ENCODE measurements at regions of chr17 and their contacts with region 1.

Region 1: DNA sequence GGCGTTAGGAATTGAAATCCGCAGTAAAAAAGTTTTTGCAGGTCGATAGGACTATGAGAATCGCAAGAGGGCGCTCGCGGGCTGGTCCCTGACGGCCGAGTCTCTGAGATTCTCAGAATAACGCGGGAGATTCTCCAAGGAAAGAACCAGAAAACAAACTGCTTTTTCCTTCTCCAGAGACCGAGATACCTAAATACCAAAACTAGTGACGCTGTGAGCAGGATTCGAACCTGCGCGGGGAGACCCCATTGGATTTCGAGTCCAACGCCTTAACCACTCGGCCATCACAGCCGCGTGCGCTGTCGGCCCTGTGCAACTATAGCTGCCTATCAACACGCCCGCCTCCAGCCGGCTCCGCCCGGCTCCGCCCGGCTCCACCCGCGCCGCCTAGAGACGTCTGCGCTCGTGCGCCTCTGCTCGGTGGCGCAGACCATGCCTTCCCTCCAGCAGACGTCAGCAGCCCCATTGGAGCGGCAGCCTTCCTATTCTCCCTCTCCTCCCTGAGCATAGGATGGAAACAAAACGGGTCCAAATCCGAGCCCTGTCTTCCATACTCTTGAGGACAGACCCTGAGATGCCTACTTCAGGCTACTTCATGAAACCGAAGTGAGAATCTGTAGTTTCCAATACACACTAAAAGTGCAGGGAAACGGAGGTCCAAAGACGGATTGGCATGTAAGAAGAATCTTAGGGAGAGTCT is 13.4 kb downstream of the PER1 start:
- DNase-seq: peak; percentile 99
- H3K4me3 Mint-ChIP-seq: no peak overlapping the region
- H3K27ac Mint-ChIP-seq: no peak overlapping the region
- H3K4me1 Mint-ChIP-seq: peaks cover 4% of the 10 kb centered on the region
- H3K27me3 Mint-ChIP-seq: peaks cover 5% of the 10 kb centered on the region

Region 2: GRCh38 chr17:8151123-8151640 is 12.4 kb after region 1 on chr17:
- intact Hi-C with region 1: loop called (anchors 1 kb)
- DNase-seq: peak; percentile 98
- H3K4me3 Mint-ChIP-seq: no peak overlapping the region
- H3K27ac Mint-ChIP-seq: no peak overlapping the region
- H3K4me1 Mint-ChIP-seq: peaks cover 42% of the 10 kb centered on the region
- H3K27me3 Mint-ChIP-seq: no peaks in the 10 kb centered on the region

Region 3: GRCh38 chr17:8173056-8173870 is 34.4 kb after region 1 on chr17:
- intact Hi-C with region 1: loop called (anchors 1 kb)
- DNase-seq: peak; percentile 93
- H3K4me3 Mint-ChIP-seq: peak overlapping the region; percentile 98
- H3K27ac Mint-ChIP-seq: peak overlapping the region; percentile 99
- H3K4me1 Mint-ChIP-seq: peaks cover 38% of the 10 kb centered on the region
- H3K27me3 Mint-ChIP-seq: no peaks in the 10 kb centered on the region

Region 4: GRCh38 chr17:8300627-8301242 is 161.9 kb after region 1 on chr17:
- intact Hi-C with region 1: loop called (anchors 5 kb)
- DNase-seq: peak; percentile 87
- H3K4me3 Mint-ChIP-seq: no peak overlapping the region
- H3K27ac Mint-ChIP-seq: no peak overlapping the region
- H3K4me1 Mint-ChIP-seq: peaks cover 8% of the 10 kb centered on the region
- H3K27me3 Mint-ChIP-seq: no peaks in the 10 kb centered on the region

Measured in activated CD4-positive, alpha-beta T cell treated with anti-CD3 and anti-CD28 coated beads, Interleukin-2, amount 10 ng/mL, durations not matched to agents 24 days and 14 days (primary cell).